ENCODE measurements at regions of chr15 and their contacts with region 1.

Region 1: DNA sequence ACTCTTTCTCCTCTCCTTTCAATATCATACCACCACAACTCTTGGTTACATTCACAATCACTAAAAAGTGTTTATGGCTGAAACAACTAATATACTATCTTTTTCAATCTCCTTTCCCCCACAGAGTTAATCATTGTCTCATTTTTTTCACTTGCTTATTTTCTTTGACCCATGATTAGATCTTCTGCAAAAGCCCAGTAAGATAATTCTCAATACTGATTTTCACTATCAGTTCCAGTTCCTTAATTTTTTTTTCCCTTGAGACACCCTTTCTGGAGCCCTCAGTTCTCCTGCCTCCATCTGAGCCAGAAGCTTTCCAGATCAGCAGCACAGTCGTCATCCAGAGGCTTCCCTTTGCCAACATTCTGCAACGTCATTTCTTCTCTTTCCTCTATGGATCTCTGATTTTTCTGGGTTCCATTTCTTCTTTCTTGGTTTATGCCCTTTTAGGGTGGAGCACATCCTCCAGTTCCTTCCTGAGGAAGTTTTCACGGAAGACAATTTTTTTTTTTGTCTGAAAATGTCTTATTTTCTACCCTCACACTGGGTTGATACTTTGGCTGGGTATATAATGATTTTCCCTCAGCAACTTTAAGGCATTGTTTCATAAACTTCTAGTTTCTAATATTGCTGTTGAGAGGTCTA is 88.7 kb upstream of the C15orf39 start:
- DNase-seq: peak; percentile 91
- ATAC-seq: peak; percentile 78
- H3K4me3 ChIP-seq: no peak overlapping the region
- H3K27ac ChIP-seq: peak overlapping the region; percentile 99
- H3K4me1 ChIP-seq: peaks cover 62% of the 10 kb centered on the region
- H3K27me3 ChIP-seq: no peaks in the 10 kb centered on the region
- CTCF ChIP-seq: no peak
- EP300 ChIP-seq: peak; percentile 94 to 98; a peak in 3 of 4 replicates
- POLR2A ChIP-seq: no peak
- RAD21 ChIP-seq: no peak; the same call in 1 of the 2 replicates

Region 2: GRCh38 chr15:75081150-75081549 is 31.8 kb before region 1 on chr15:
- CTCF ChIA-PET with region 1: no interaction called
- POLR2A ChIA-PET with region 1: no interaction called
- RAD21 ChIA-PET with region 1: no interaction called
- SMC1A ChIA-PET with region 1: no interaction called
- in situ Hi-C with region 1: no loop called
- intact Hi-C with region 1: no loop called
- DNase-seq: no peak
- ATAC-seq: no peak
- H3K4me3 ChIP-seq: no peak overlapping the region
- H3K27ac ChIP-seq: no peak overlapping the region
- H3K4me1 ChIP-seq: peaks cover 7% of the 10 kb centered on the region; the same call in 1 of the 2 replicates
- H3K27me3 ChIP-seq: no peaks in the 10 kb centered on the region
- CTCF ChIP-seq: no peak
- EP300 ChIP-seq: no peak
- POLR2A ChIP-seq: no peak
- RAD21 ChIP-seq: no peak

Region 3: GRCh38 chr15:75123395-75123794 is 10.4 kb after region 1 on chr15:
- CTCF ChIA-PET with region 1: interaction called, 11 read pairs
- POLR2A ChIA-PET with region 1: interaction called, 49 read pairs
- RAD21 ChIA-PET with region 1: interaction called, 52 read pairs
- SMC1A ChIA-PET with region 1: interaction called, 48 read pairs
- in situ Hi-C with region 1: no loop called
- intact Hi-C with region 1: loop called (anchors 1 kb)
- DNase-seq: no peak
- ATAC-seq: no peak
- H3K4me3 ChIP-seq: no peak overlapping the region
- H3K27ac ChIP-seq: peak overlapping the region; percentile 41
- H3K4me1 ChIP-seq: peaks cover 41% of the 10 kb centered on the region
- H3K27me3 ChIP-seq: no peaks in the 10 kb centered on the region
- CTCF ChIP-seq: no peak
- EP300 ChIP-seq: no peak
- POLR2A ChIP-seq: no peak
- RAD21 ChIP-seq: no peak

Region 4: GRCh38 chr15:75130597-75131268 is 17.8 kb after region 1 on chr15:
- CTCF ChIA-PET with region 1: interaction called, 11 read pairs
- POLR2A ChIA-PET with region 1: interaction called, 49 read pairs
- RAD21 ChIA-PET with region 1: interaction called, 52 read pairs
- SMC1A ChIA-PET with region 1: interaction called, 48 read pairs
- in situ Hi-C with region 1: no loop called
- intact Hi-C with region 1: loop called (anchors 1 kb)
- DNase-seq: peak; percentile 89
- ATAC-seq: peak; percentile 92
- H3K4me3 ChIP-seq: peak overlapping the region; percentile 13; the same call in 1 of the 2 replicates
- H3K27ac ChIP-seq: peak overlapping the region; percentile 99
- H3K4me1 ChIP-seq: peaks cover 67% of the 10 kb centered on the region
- H3K27me3 ChIP-seq: no peaks in the 10 kb centered on the region
- CTCF ChIP-seq: no peak
- EP300 ChIP-seq: peak; percentile 55 to 82; a peak in 3 of 4 replicates
- POLR2A ChIP-seq: no peak
- RAD21 ChIP-seq: 0 out of 2 replicates have a peak, but pooled peaks have one; percentile 9

Region 5: GRCh38 chr15:75178171-75179075 is 65.5 kb after region 1 on chr15:
- CTCF ChIA-PET with region 1: no interaction called
- POLR2A ChIA-PET with region 1: no interaction called
- RAD21 ChIA-PET with region 1: no interaction called
- SMC1A ChIA-PET with region 1: no interaction called
- in situ Hi-C with region 1: no loop called
- intact Hi-C with region 1: no loop called
- DNase-seq: no peak
- ATAC-seq: peak; percentile 56
- H3K4me3 ChIP-seq: peak overlapping the region; percentile 32; the same call in 1 of the 2 replicates
- H3K27ac ChIP-seq: no peak overlapping the region
- H3K4me1 ChIP-seq: peaks cover 7% of the 10 kb centered on the region
- H3K27me3 ChIP-seq: no peaks in the 10 kb centered on the region
- CTCF ChIP-seq: no peak
- EP300 ChIP-seq: no peak
- POLR2A ChIP-seq: no peak
- RAD21 ChIP-seq: peak; percentile 31; the same call in 1 of the 2 replicates